Spleen (tissue), 13 donors: ENCODE measurements at regions of chr18 and their contacts with region 1.

Region 1: DNA sequence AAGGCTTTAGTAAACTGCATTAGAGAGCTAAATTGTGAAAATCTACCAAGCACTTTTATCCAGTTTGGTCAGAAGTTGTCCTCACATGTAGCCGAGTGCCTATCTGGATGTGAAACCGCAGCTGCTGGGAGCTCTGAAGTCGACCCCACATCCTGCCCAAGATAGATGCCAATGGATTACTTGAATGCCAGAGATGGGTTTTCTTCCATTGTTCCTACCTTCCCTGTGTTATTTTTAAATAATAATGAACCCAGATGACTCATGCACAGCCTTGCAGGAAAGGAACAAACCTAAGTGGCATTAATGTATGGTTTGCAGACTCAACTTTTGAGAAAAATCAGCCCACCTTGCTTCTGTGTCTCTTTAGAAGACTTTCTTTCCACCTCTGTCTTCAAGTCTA is 408.5 kb downstream of the FBXO15 start:
- DNase-seq: no peak
- H3K4me3 ChIP-seq: no peak overlapping the region
- H3K27ac ChIP-seq: no peak overlapping the region
- H3K4me1 ChIP-seq: no peaks in the 10 kb centered on the region
- H3K27me3 ChIP-seq: no peaks in the 10 kb centered on the region
- CTCF ChIP-seq: no peak
- POLR2A ChIP-seq: no peak

Region 2: GRCh38 chr18:73785271-73785670 is 46.2 kb after region 1 on chr18:
- intact Hi-C with region 1: loop called (anchors 5 kb)
- DNase-seq: no peak
- H3K4me3 ChIP-seq: no peak overlapping the region
- H3K27ac ChIP-seq: no peak overlapping the region
- H3K4me1 ChIP-seq: no peaks in the 10 kb centered on the region
- H3K27me3 ChIP-seq: no peaks in the 10 kb centered on the region
- CTCF ChIP-seq: no peak
- POLR2A ChIP-seq: no peak